Activated CD8-positive, alpha-beta T cell treated with anti-CD3 and anti-CD28 coated beads, Interleukin-2, amount 10 ng/mL, durations not matched to agents 7 days and 5 days (primary cell): ENCODE measurements at regions of chr3 and their contacts with region 1.

Region 1: GRCh38 chr3:51982782-51983577 is at the start of gene ACY1:
- DNase-seq: peak; percentile 78
- ATAC-seq: peak; percentile 85
- H3K4me3 Mint-ChIP-seq: peak within 1 kb of the TSS; percentile 96
- H3K27ac Mint-ChIP-seq: peak within 1 kb of the TSS; percentile 93
- H3K4me1 Mint-ChIP-seq: peaks cover 28% of the 10 kb centered on the region
- H3K27me3 Mint-ChIP-seq: no peaks in the 10 kb centered on the region
- total RNA-seq, gene ACY1: 17.4 to 21.2 TPM

Region 2: GRCh38 chr3:51967384-51968169 is 15.4 kb before region 1 on chr3 and contains the start of gene PCBP4:
- CTCF ChIA-PET with region 1: interaction called, 14 read pairs
- POLR2A ChIA-PET with region 1: interaction called, 19 read pairs
- DNase-seq: peak; percentile 45
- ATAC-seq: peak; percentile 62
- H3K4me3 Mint-ChIP-seq: peak within 1 kb of the TSS; percentile 75
- H3K27ac Mint-ChIP-seq: peak within 1 kb of the TSS; percentile 64
- H3K4me1 Mint-ChIP-seq: peaks cover 21% of the 10 kb centered on the region
- H3K27me3 Mint-ChIP-seq: peaks cover 6% of the 10 kb centered on the region
- total RNA-seq, gene PCBP4: 12.7 to 16.1 TPM

Region 3: DNA sequence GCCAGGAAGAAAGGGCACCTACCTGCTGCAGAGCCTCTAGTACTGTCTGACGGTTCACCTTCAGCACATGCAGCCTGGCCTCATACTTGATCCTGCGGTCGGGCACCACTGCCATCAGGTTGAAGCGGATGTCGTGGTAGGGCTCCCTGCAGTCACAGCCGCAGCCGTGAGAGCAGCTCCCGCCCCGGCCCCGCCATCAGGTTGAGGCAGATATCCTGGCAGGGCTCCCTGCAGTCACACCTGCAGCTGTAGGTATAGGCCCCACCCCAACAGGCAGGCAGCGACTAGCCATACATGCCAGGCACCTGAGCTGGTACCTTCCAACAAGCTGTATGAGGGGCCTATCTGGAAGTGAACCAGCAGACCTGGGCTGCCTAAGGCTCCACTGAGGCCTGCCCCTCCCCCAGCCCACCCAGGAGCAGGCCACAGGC is 423.3 kb after region 1 on chr3:
- CTCF ChIA-PET with region 1: no interaction called
- POLR2A ChIA-PET with region 1: no interaction called
- DNase-seq: no peak
- ATAC-seq: no peak
- H3K4me3 Mint-ChIP-seq: no peak overlapping the region
- H3K27ac Mint-ChIP-seq: peak overlapping the region; percentile 44
- H3K4me1 Mint-ChIP-seq: peaks cover 24% of the 10 kb centered on the region
- H3K27me3 Mint-ChIP-seq: no peaks in the 10 kb centered on the region